Posterior cingulate gyrus (tissue), 11 donors: ENCODE measurements at regions of chr19 and their contacts with region 1.

Region 1: DNA sequence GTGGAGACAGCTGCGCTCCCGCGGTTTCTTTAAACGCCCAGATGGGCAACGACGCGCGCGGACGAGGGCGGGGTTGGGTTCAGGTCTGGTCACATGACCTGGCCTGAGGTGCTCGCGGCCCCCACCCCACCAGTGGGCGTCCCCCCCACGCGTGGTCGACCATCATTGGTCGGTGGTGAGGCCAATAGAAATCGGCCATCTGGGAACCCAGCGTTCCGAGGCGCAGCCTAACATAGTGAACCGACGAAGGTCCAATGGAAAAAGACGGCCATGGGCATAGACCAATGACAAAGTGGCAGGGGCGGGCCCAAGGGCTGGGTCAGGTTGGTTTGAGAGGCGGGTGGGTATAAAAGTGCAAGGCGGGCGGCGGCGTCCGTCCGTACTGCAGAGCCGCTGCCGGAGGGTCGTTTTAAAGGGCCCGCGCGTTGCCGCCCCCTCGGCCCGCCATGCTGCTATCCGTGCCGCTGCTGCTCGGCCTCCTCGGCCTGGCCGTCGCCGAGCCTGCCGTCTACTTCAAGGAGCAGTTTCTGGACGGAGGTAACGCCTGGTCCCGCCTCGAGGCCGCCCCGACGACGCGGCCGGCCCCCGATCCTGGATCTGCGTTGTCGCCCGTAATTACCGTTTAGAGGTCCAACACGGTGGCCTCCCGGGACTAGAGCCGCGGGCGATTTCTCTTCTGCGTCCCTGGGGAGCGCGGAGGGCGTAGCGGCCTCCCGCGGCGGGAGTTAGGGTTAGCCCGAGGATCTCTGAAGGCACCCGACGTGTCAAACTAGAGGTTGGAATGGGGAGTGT is at the start of gene CALR:
- DNase-seq: peak; percentile 99 to 100 (median 100)

Region 2: GRCh38 chr19:12881172-12881808 is 57.1 kb before region 1 on chr19 and contains the start of gene DNASE2:
- intact Hi-C with region 1: loop called (anchors 10 kb)
- DNase-seq: peak; percentile 76 to 98 (median 88)

Region 3: GRCh38 chr19:12924616-12925276 is 13.7 kb before region 1 on chr19:
- intact Hi-C with region 1: no loop called
- DNase-seq: no peak